PC-9 (cell line): ENCODE measurements at regions of chr3 and their contacts with region 1.

Region 1: DNA sequence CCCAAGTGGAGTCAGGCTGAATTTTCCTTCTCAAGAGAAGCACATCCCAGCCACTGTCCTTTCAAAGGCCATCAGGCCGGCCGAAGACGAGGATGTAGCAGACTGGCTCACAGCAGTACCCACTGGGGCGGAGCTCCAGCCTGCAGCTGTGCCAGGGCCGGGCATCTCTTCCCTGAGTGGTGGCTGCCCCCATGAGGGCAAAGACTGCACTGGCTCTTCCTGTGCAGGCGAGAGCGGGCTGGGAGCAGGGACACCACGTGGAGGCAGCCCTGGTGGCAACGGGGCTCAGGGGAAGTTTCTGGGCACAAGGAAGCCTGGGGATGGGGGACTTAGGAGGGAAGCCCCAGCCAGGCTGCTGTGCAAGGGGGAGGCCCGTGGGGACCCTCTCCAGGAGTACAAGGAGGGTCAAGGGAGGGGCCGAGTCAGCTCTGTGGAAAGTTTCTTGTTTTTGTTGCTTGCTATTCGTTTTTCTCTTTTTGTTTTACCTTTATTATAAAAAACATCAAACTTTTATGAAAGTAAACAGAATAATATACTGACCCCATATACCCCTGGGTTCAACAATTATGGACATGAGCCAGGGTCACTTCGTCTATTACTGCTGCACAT is 66.1 kb downstream of the RPN1 start:
- DNase-seq: peak; percentile 76 to 90
- H3K4me3 ChIP-seq: no peak overlapping the region
- H3K27ac ChIP-seq: no peak overlapping the region
- H3K4me1 ChIP-seq: peaks cover 25% of the 10 kb centered on the region
- H3K27me3 ChIP-seq: no peaks in the 10 kb centered on the region
- CTCF ChIP-seq: peak; percentile 89

Region 2: DNA sequence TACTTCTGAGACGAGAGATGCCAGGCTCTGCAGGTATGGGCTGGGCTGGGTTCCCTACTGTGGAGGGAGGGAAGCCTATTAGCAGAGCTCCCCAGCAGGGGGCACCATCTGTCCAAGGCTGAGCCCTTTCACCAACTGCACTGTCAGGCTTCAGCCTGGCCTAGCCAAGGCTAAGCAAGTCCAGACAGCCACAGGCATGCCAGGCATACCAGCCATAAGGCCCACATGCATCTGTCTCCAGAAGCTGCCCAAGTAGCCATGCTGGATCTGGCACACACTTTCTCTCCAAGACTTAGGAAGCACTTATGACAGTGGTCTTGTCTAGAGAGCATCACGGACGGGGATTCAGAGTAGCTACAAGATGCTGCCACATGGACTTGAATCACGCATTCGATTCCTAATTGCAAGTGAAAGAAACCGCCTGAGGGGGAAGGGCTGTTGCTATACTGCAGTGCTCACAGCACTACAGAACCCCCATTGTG is 489.3 kb before region 1 on chr3:
- CTCF ChIA-PET with region 1: no interaction called
- POLR2A ChIA-PET with region 1: no interaction called
- intact Hi-C with region 1: loop called (anchors 5 kb)
- DNase-seq: peak; percentile 56 to 86
- H3K4me3 ChIP-seq: no peak overlapping the region
- H3K27ac ChIP-seq: no peak overlapping the region
- H3K4me1 ChIP-seq: no peaks in the 10 kb centered on the region
- H3K27me3 ChIP-seq: no peaks in the 10 kb centered on the region
- CTCF ChIP-seq: peak; percentile 76

Region 3: GRCh38 chr3:128226795-128227395 is 357.6 kb before region 1 on chr3:
- CTCF ChIA-PET with region 1: no interaction called
- POLR2A ChIA-PET with region 1: no interaction called
- intact Hi-C with region 1: loop called (anchors 2 kb)
- DNase-seq: peak in 1 of 2 experiments; percentile 68
- H3K4me3 ChIP-seq: no peak overlapping the region
- H3K27ac ChIP-seq: no peak overlapping the region
- H3K4me1 ChIP-seq: no peaks in the 10 kb centered on the region
- H3K27me3 ChIP-seq: no peaks in the 10 kb centered on the region
- CTCF ChIP-seq: peak; percentile 81

Region 4: DNA sequence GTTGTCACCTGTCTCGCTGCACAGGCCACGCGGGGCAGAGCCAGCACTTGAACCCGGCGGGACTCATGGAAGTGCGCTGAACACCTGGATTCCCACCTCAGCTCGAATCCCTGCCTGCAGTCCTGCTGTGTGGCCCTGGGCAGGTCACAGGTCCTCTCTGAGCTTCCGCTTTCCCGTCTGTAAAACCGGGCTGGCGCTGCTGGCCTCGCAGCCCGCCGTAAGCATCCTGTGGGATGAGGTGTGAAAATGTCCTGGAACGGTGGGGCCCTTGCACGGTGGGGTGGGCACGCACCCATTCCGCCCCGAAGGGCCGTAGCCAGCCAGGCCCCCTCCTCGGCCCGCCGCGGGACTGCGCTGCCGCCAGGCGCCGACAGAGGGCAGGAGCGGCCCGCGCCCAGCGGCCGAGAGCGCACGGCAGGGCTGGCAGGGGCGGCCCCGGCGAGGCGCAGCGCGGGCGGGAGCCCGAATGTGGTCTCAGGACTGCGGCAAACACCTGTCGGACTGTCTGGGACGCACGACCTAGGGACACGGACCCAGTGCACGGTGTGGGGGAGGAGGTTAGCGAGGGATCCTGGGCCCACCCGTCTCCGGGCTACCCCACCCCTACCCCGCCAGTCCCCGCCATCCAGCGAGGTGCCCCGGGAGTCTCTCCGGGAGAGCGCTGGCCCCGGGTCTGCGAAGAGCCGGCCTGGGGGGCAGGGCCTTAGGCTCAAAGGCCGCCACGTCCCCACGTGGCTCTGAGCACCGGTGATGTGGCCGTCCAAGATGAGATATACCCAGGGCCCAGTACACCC is 158.2 kb before region 1 on chr3:
- CTCF ChIA-PET with region 1: interaction called, 3 read pairs
- POLR2A ChIA-PET with region 1: no interaction called
- intact Hi-C with region 1: loop called (anchors 1 kb)
- DNase-seq: peak in 1 of 2 experiments; percentile 76
- H3K4me3 ChIP-seq: peak overlapping the region; percentile 20; the same call in 1 of the 2 replicates
- H3K27ac ChIP-seq: no peak overlapping the region
- H3K4me1 ChIP-seq: peaks cover 55% of the 10 kb centered on the region
- H3K27me3 ChIP-seq: no peaks in the 10 kb centered on the region
- CTCF ChIP-seq: peak; percentile 76

Region 5: GRCh38 chr3:128487813-128488635 is 96.5 kb before region 1 on chr3:
- CTCF ChIA-PET with region 1: interaction called, 3 read pairs
- POLR2A ChIA-PET with region 1: interaction called, 23 read pairs
- intact Hi-C with region 1: loop called (anchors 1 kb)
- DNase-seq: peak; percentile 81 to 94
- H3K4me3 ChIP-seq: peak overlapping the region; percentile 93
- H3K27ac ChIP-seq: peak overlapping the region; percentile 7; the same call in 1 of the 2 replicates
- H3K4me1 ChIP-seq: peaks cover 44% of the 10 kb centered on the region
- H3K27me3 ChIP-seq: no peaks in the 10 kb centered on the region
- CTCF ChIP-seq: no peak

Region 6: GRCh38 chr3:128607710-128608048 is 23.2 kb after region 1 on chr3:
- CTCF ChIA-PET with region 1: no interaction called
- POLR2A ChIA-PET with region 1: no interaction called
- intact Hi-C with region 1: loop called (anchors 1 kb)
- DNase-seq: no peak
- H3K4me3 ChIP-seq: no peak overlapping the region
- H3K27ac ChIP-seq: no peak overlapping the region
- H3K4me1 ChIP-seq: no peaks in the 10 kb centered on the region
- H3K27me3 ChIP-seq: no peaks in the 10 kb centered on the region
- CTCF ChIP-seq: no peak